WTC11 (cell line): ENCODE measurements at regions of chr20 and their contacts with region 1.

Region 1: GRCh38 chr20:3563548-3564177 is 92.8 kb downstream of the ATRN start:
- DNase-seq: no peak
- ATAC-seq: peak; percentile 50; the same call in 1 of the 2 replicates
- H3K4me3 Mint-ChIP-seq: no peak overlapping the region
- H3K27ac Mint-ChIP-seq: no peak overlapping the region
- H3K4me1 Mint-ChIP-seq: peaks cover 10% of the 10 kb centered on the region
- H3K27me3 Mint-ChIP-seq: no peaks in the 10 kb centered on the region
- CTCF ChIP-seq: 0 out of 2 replicates have a peak, but pooled peaks have one; percentile 25

Region 2: GRCh38 chr20:2825761-2826160 is 737.9 kb before region 1 on chr20:
- CTCF ChIA-PET with region 1: no interaction called
- POLR2A ChIA-PET with region 1: no interaction called
- DNase-seq: no peak
- ATAC-seq: no peak
- H3K4me3 Mint-ChIP-seq: no peak overlapping the region
- H3K27ac Mint-ChIP-seq: no peak overlapping the region
- H3K4me1 Mint-ChIP-seq: peaks cover 4% of the 10 kb centered on the region
- H3K27me3 Mint-ChIP-seq: peaks cover 59% of the 10 kb centered on the region
- CTCF ChIP-seq: no peak

Region 3: DNA sequence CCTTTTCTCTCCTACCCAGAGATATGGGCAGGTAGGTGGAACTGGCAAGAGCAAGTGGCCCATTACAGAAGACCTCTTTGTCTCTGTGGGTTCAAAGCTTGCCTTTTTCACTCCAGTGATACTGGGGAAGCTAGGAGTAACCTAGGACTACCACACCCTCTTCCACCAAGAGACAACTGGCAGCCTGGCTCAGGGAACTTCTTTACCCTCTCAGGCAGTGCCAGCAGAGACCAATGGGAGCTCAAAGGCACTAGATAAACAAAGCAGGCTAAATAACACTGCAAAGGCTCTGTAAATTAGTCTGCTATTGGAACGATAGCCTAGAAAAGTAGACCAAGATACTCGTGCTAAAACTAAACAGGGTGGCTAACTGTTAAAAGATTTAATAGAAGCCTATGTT is 60.8 kb before region 1 on chr20:
- CTCF ChIA-PET with region 1: no interaction called
- POLR2A ChIA-PET with region 1: no interaction called
- DNase-seq: no peak
- ATAC-seq: no peak
- H3K4me3 Mint-ChIP-seq: no peak overlapping the region
- H3K27ac Mint-ChIP-seq: no peak overlapping the region; the same call in 1 of the 2 replicates
- H3K4me1 Mint-ChIP-seq: no peaks in the 10 kb centered on the region
- H3K27me3 Mint-ChIP-seq: no peaks in the 10 kb centered on the region
- CTCF ChIP-seq: no peak

Region 4: GRCh38 chr20:3580412-3580811 is 16.7 kb after region 1 on chr20:
- CTCF ChIA-PET with region 1: interaction called, 10 read pairs
- POLR2A ChIA-PET with region 1: no interaction called
- DNase-seq: peak; percentile 23
- ATAC-seq: peak; percentile 97
- H3K4me3 Mint-ChIP-seq: no peak overlapping the region
- H3K27ac Mint-ChIP-seq: no peak overlapping the region
- H3K4me1 Mint-ChIP-seq: peaks cover 6% of the 10 kb centered on the region
- H3K27me3 Mint-ChIP-seq: no peaks in the 10 kb centered on the region
- CTCF ChIP-seq: no peak

Region 5: GRCh38 chr20:3612795-3613572 is 49.3 kb after region 1 on chr20:
- CTCF ChIA-PET with region 1: interaction called, 15 read pairs
- POLR2A ChIA-PET with region 1: interaction called, 3 read pairs
- DNase-seq: no peak
- ATAC-seq: 0 out of 2 replicates have a peak, but pooled peaks have one; percentile 34
- H3K4me3 Mint-ChIP-seq: no peak overlapping the region
- H3K27ac Mint-ChIP-seq: peak overlapping the region; percentile 63; the same call in 1 of the 2 replicates
- H3K4me1 Mint-ChIP-seq: peaks cover 10% of the 10 kb centered on the region
- H3K27me3 Mint-ChIP-seq: no peaks in the 10 kb centered on the region
- CTCF ChIP-seq: no peak

Region 6: DNA sequence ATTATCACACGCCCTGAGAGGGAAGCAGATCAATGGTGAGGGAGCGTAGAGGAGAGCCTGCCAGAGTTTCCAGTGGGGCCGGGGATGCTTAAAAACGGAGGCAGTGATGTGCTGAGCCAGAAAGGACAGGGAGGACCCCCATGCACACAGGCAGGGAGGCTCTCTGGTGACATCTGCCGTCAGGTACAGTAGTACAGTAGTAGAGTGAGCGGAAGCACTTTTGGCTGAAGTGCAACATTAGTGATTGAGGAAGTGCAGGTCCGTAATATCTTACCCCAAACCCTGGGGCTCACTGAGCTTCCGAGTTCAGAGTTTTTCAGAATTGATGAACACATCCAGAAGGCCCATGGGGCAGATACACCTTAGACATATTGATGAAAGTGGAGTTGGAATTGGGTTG is 57.4 kb after region 1 on chr20:
- CTCF ChIA-PET with region 1: interaction called, 12 read pairs
- POLR2A ChIA-PET with region 1: no interaction called
- DNase-seq: peak; percentile 37
- ATAC-seq: peak; percentile 85
- H3K4me3 Mint-ChIP-seq: no peak overlapping the region
- H3K27ac Mint-ChIP-seq: no peak overlapping the region
- H3K4me1 Mint-ChIP-seq: peaks cover 1% of the 10 kb centered on the region
- H3K27me3 Mint-ChIP-seq: no peaks in the 10 kb centered on the region; the same call in 1 of the 2 replicates
- CTCF ChIP-seq: no peak

Region 7: GRCh38 chr20:3670511-3670910 is 106.8 kb after region 1 on chr20:
- CTCF ChIA-PET with region 1: interaction called, 10 read pairs
- POLR2A ChIA-PET with region 1: no interaction called
- DNase-seq: peak; percentile 38
- ATAC-seq: peak; percentile 29
- H3K4me3 Mint-ChIP-seq: no peak overlapping the region
- H3K27ac Mint-ChIP-seq: no peak overlapping the region
- H3K4me1 Mint-ChIP-seq: peaks cover 30% of the 10 kb centered on the region
- H3K27me3 Mint-ChIP-seq: peaks cover 38% of the 10 kb centered on the region
- CTCF ChIP-seq: no peak